ENCODE measurements at regions of chr7 and their contacts with region 1.

Region 1: DNA sequence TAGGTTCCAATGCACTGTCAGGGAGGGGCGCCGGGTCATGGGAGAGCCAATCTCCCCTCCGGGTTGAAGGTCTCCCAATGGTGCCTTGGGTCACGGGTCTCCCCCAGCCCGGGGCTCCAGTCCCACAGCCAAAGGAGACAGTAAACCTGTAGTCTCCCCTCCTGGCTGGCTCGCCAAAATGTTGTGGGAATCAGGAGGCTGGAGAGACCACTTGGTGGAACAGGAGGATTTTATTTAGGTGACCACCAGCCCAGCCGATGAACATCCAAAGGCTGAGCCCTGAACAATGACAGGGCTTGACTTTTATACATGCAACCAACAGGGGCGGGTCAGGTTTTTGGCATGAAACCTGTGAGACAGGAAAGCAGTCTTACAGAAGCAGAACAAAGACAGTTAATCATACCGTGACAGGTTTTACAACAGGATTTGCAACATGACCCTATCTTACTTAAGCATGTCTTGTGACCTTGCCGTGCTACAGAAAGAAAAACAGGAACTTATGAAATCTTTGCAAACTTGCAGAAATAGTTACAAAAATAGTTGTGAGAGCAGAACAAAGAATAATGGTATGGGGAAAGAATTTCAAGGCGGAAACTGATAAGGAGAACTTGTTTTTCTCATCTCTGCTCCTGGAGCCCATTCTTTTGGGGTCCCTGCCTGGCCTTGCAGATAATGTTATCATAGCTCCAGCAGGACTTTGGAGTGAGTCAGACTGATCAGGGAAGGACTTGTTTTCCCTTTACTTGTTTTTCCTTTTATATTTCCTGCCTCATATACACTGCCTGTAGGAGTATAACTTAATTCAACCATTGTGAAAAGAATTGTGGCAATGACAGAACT is 7.1 kb downstream of the ERV3-1 start:
- DNase-seq: no peak
- ATAC-seq: peak in 6 of 8 donors; percentile 30 to 47 (median 32)
- H3K4me3 ChIP-seq: no peak overlapping the region
- H3K27ac ChIP-seq: peak overlapping the region in 6 of 10 donors; percentile 24 to 86 (median 62)
- H3K4me1 ChIP-seq: peaks cover 0 to 67% (median 32%) of the 10 kb centered on the region in 9 donors
- H3K27me3 ChIP-seq: no peaks in the 10 kb centered on the region
- CTCF ChIP-seq: no peak

Region 2: GRCh38 chr7:64914557-64914956 is 84.8 kb before region 1 on chr7:
- intact Hi-C with region 1: loop called in 1 of 10 experiments (anchors 10 kb)
- DNase-seq: no peak
- ATAC-seq: no peak
- H3K4me3 ChIP-seq: no peak overlapping the region
- H3K27ac ChIP-seq: no peak overlapping the region
- H3K4me1 ChIP-seq: peaks cover 0 to 6% (median 0%) of the 10 kb centered on the region in 9 donors
- H3K27me3 ChIP-seq: no peaks in the 10 kb centered on the region
- CTCF ChIP-seq: no peak

Measured in heart right ventricle (tissue), 16 donors.